MCF 10A (cell line): ENCODE measurements at regions of chr10 and their contacts with region 1.

Region 1: DNA sequence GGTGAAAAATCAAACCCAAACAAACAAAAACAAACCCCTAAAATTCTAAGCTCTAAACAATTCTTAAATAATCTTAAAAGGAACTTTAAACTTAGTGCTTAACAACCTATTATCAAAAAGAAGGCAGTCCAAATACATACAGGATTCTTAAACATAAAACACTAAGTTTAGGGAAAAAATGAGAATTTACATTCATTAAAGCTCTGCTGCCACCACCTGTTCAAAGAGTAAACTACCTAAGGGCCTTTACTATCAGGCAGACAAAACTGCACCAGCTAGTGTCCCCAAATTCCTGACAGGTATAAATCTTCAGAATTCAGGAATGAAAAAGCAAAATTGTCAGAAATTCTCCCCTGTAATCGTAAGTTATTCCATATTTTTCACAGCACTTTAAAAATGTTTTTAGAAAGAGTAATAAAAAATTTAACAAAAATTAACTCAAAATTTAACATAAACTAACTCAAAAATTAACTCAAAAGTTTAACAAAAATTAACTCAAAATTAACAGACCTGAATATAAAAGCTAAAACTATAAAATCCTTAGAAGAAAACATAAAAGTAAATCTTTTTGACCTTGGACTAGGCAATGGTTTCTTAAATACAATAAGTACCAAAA is 55.1 kb downstream of the PDZD8 start:
- DNase-seq: peak; percentile 42
- H3K4me3 Mint-ChIP-seq: no peak overlapping the region
- H3K27ac Mint-ChIP-seq: no peak overlapping the region
- H3K4me1 Mint-ChIP-seq: peaks cover 5% of the 10 kb centered on the region
- H3K27me3 Mint-ChIP-seq: no peaks in the 10 kb centered on the region
- CTCF ChIP-seq: peak; percentile 61

Region 2: GRCh38 chr10:117226824-117227451 is 93.2 kb before region 1 on chr10:
- CTCF ChIA-PET with region 1: interaction called, 15 read pairs
- POLR2A ChIA-PET with region 1: no interaction called
- intact Hi-C with region 1: loop called (anchors 1 kb)
- DNase-seq: peak; percentile 64
- H3K4me3 Mint-ChIP-seq: no peak overlapping the region
- H3K27ac Mint-ChIP-seq: no peak overlapping the region
- H3K4me1 Mint-ChIP-seq: no peaks in the 10 kb centered on the region
- H3K27me3 Mint-ChIP-seq: peaks cover 55% of the 10 kb centered on the region
- CTCF ChIP-seq: peak; percentile 38

Region 3: DNA sequence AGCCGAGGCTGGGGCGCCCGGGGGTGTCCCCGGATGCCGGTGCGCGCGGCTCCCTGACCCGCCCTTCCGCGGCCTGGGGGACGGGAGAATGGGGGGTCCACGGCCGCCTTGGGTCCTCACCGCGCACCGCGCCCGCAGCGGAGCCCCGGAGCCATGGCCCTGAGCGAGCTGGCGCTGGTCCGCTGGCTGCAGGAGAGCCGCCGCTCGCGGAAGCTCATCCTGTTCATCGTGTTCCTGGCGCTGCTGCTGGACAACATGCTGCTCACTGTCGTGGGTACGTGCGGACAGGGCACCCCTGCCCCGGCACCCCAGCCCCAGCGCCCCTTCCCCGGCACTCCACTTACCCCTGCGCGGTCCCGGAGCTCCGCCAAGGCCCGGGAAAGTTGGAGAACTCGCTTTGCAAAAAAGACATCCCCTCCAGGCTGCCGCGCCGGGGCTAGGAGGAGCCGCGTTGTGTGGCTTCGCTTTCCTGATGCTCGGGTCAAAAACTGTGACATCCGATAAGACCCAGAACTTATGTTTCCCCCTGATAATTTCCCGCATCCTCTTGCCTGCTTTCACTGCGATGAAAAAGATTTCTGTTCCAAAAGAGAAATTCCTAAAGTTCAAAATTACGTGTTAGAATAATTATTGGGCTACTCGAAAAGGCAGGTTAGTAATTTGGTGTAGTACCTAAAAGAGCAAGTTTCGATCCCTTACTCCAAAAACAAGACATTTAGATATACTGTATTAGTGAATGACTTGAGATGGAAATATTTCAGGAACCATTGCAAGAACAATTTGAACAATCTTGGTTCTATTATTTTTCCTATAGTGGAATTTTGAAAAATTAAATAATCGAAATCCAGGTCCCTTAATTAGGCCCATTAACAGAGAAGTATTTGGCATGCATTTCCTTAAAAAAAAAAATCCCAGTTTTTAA is 78.4 kb before region 1 on chr10:
- CTCF ChIA-PET with region 1: interaction called, 10 read pairs
- POLR2A ChIA-PET with region 1: no interaction called
- intact Hi-C with region 1: no loop called
- DNase-seq: no peak
- H3K4me3 Mint-ChIP-seq: no peak overlapping the region
- H3K27ac Mint-ChIP-seq: no peak overlapping the region
- H3K4me1 Mint-ChIP-seq: no peaks in the 10 kb centered on the region
- H3K27me3 Mint-ChIP-seq: peaks cover 44% of the 10 kb centered on the region
- CTCF ChIP-seq: no peak

Region 4: GRCh38 chr10:117249493-117250093 is 70.6 kb before region 1 on chr10:
- CTCF ChIA-PET with region 1: interaction called, 21 read pairs
- POLR2A ChIA-PET with region 1: no interaction called
- intact Hi-C with region 1: no loop called
- DNase-seq: no peak
- H3K4me3 Mint-ChIP-seq: no peak overlapping the region
- H3K27ac Mint-ChIP-seq: no peak overlapping the region
- H3K4me1 Mint-ChIP-seq: no peaks in the 10 kb centered on the region
- H3K27me3 Mint-ChIP-seq: peaks cover 33% of the 10 kb centered on the region
- CTCF ChIP-seq: no peak

Region 5: GRCh38 chr10:117284716-117285494 is 35.3 kb before region 1 on chr10:
- CTCF ChIA-PET with region 1: interaction called, 10 read pairs
- POLR2A ChIA-PET with region 1: no interaction called
- intact Hi-C with region 1: no loop called
- DNase-seq: no peak
- H3K4me3 Mint-ChIP-seq: no peak overlapping the region
- H3K27ac Mint-ChIP-seq: no peak overlapping the region
- H3K4me1 Mint-ChIP-seq: no peaks in the 10 kb centered on the region
- H3K27me3 Mint-ChIP-seq: no peaks in the 10 kb centered on the region
- CTCF ChIP-seq: no peak

Region 6: DNA sequence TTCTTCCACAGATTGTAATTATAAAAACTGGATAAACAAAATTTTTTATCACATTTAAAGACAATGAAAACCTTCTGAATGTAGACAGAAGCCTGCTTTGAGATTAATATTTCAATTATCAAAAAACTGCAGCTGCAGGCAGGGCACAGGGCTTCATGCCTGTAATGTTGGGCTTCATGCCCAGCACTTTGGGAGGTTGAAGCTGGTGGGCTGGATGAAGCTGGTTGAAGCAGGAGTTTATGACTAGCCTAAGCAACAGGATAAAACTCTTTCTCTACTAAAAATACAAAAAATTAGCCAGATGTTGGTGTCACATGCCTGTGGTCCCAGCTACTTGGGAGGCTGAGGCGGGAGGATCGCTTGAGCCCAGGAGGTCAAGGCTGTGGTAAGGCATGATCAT is 13.9 kb after region 1 on chr10:
- CTCF ChIA-PET with region 1: interaction called, 19 read pairs
- POLR2A ChIA-PET with region 1: interaction called, 5 read pairs
- intact Hi-C with region 1: no loop called
- DNase-seq: no peak
- H3K4me3 Mint-ChIP-seq: no peak overlapping the region
- H3K27ac Mint-ChIP-seq: no peak overlapping the region
- H3K4me1 Mint-ChIP-seq: peaks cover 7% of the 10 kb centered on the region
- H3K27me3 Mint-ChIP-seq: no peaks in the 10 kb centered on the region
- CTCF ChIP-seq: no peak